ENCODE measurements at regions of chr2 and their contacts with region 1.

Region 1: DNA sequence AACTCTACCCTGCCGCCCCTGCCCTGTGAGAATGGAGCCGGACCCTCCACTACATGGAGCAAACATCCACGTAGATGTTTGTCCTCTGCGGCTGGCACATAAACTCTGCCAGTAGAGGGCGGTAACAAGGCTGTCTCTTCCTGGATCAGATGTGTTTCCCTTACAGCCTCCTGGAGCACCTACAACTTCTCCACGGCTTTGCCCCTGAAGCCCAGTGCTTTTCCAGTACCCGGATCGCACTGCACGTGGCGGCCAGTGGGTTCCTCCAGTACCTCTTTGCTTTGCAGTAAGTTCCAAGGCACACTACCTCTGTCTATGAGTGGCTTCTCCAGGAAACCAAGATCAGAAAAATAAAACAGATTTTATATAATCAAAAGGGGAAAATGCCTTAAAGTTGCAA is 651.3 kb downstream of the DCDC2C start:
- DNase-seq: peak; percentile 69
- H3K4me3 ChIP-seq: no peak overlapping the region
- H3K27ac ChIP-seq: peak overlapping the region; percentile 70
- H3K4me1 ChIP-seq: peaks cover 25% of the 10 kb centered on the region
- H3K27me3 ChIP-seq: no peaks in the 10 kb centered on the region
- CTCF ChIP-seq: peak; percentile 66 to 79
- POLR2A ChIP-seq: no peak

Region 2: DNA sequence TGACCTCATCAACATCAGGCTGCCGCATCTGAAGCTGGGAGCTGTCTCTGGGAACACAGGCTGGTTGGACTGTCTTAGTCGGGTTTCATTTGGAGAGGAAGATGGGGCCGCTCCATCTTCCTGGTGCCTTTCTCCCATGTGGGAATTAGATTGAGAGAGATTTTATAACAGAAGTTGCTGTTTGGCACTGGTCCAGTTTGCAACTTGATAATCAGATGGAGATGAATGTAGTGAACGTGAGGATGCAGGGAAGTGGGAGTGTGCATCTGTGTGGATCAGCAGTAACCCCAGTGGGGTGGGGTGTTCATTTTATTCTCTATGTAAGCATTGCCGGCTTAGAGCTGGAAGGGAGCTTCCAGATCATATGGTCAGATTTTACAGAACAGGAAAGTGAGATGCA is 400.4 kb before region 1 on chr2:
- CTCF ChIA-PET with region 1: no interaction called
- POLR2A ChIA-PET with region 1: no interaction called
- dilution Hi-C with region 1: no loop called
- intact Hi-C with region 1: no loop called
- DNase-seq: no peak
- H3K4me3 ChIP-seq: no peak overlapping the region
- H3K27ac ChIP-seq: no peak overlapping the region
- H3K4me1 ChIP-seq: no peaks in the 10 kb centered on the region
- H3K27me3 ChIP-seq: no peaks in the 10 kb centered on the region
- CTCF ChIP-seq: no peak
- POLR2A ChIP-seq: no peak

Region 3: DNA sequence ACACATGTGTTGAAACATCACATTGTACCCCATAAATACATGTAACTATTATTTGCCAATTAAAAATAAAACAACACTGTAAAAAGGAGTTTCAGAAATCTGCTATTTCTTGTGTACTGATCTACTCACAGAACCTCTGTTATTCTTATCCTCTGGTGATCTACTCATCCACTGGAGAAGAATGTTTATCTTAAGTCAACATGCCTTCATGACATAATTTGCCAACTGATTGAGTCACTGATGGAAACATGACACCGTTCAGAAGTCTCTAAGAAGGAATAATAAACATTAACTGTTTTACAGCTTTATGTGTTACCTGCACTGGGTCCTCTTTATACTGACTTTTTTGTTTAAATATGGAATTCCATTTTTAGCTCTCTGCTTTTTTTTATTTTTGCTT is 96.1 kb before region 1 on chr2:
- CTCF ChIA-PET with region 1: interaction called, 3 read pairs
- POLR2A ChIA-PET with region 1: no interaction called
- dilution Hi-C with region 1: no loop called
- intact Hi-C with region 1: loop called (anchors 5 kb)
- DNase-seq: peak; percentile 49
- H3K4me3 ChIP-seq: no peak overlapping the region
- H3K27ac ChIP-seq: no peak overlapping the region
- H3K4me1 ChIP-seq: no peaks in the 10 kb centered on the region
- H3K27me3 ChIP-seq: no peaks in the 10 kb centered on the region
- CTCF ChIP-seq: no peak
- POLR2A ChIP-seq: no peak

Region 4: DNA sequence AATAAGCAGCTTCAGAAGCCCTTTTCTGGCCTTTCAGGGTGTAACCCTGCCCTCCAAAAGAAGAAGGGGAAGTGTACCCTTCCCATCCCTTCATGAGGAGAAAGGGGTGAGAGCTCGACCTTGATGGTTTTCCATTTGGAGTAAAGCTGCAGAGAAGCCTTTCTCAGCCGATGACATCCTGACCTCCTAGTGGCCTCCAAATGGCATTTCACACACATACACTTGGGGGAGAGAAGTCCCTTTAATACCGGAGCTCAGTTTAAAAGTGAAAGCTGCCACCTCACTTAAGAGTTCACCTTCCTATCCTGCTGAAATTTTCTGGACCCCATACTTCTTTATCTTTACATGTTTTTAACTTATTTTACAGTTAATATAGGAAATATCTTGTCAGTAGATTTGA is 65.4 kb after region 1 on chr2:
- CTCF ChIA-PET with region 1: no interaction called
- POLR2A ChIA-PET with region 1: no interaction called
- dilution Hi-C with region 1: no loop called
- intact Hi-C with region 1: loop called (anchors 2 kb)
- DNase-seq: no peak
- H3K4me3 ChIP-seq: peak overlapping the region in 1 of 3 experiments; percentile 15
- H3K27ac ChIP-seq: peak overlapping the region; percentile 48
- H3K4me1 ChIP-seq: peaks cover 25% of the 10 kb centered on the region
- H3K27me3 ChIP-seq: no peaks in the 10 kb centered on the region
- CTCF ChIP-seq: no peak
- POLR2A ChIP-seq: no peak

Region 5: GRCh38 chr2:4556135-4556896 is 201.6 kb after region 1 on chr2:
- CTCF ChIA-PET with region 1: no interaction called
- POLR2A ChIA-PET with region 1: no interaction called
- dilution Hi-C with region 1: no loop called
- intact Hi-C with region 1: loop called (anchors 5 kb)
- DNase-seq: peak; percentile 61
- H3K4me3 ChIP-seq: no peak overlapping the region
- H3K27ac ChIP-seq: peak overlapping the region; percentile 69
- H3K4me1 ChIP-seq: peaks cover 15% of the 10 kb centered on the region
- H3K27me3 ChIP-seq: no peaks in the 10 kb centered on the region
- CTCF ChIP-seq: no peak
- POLR2A ChIP-seq: no peak

Region 6: GRCh38 chr2:4588606-4589005 is 233.9 kb after region 1 on chr2:
- CTCF ChIA-PET with region 1: no interaction called
- POLR2A ChIA-PET with region 1: no interaction called
- dilution Hi-C with region 1: no loop called
- intact Hi-C with region 1: no loop called
- DNase-seq: no peak
- H3K4me3 ChIP-seq: no peak overlapping the region
- H3K27ac ChIP-seq: no peak overlapping the region
- H3K4me1 ChIP-seq: no peaks in the 10 kb centered on the region
- H3K27me3 ChIP-seq: no peaks in the 10 kb centered on the region
- CTCF ChIP-seq: no peak
- POLR2A ChIP-seq: no peak

Region 7: GRCh38 chr2:4678927-4679326 is 324.2 kb after region 1 on chr2:
- CTCF ChIA-PET with region 1: no interaction called
- POLR2A ChIA-PET with region 1: no interaction called
- dilution Hi-C with region 1: no loop called
- intact Hi-C with region 1: loop called (anchors 2 kb)
- DNase-seq: no peak
- H3K4me3 ChIP-seq: no peak overlapping the region
- H3K27ac ChIP-seq: no peak overlapping the region
- H3K4me1 ChIP-seq: peaks cover 6% of the 10 kb centered on the region
- H3K27me3 ChIP-seq: no peaks in the 10 kb centered on the region
- CTCF ChIP-seq: no peak
- POLR2A ChIP-seq: no peak

Measured in endothelial cell of umbilical vein (primary cell).